Left ventricle myocardium superior (tissue), 1 donor: ENCODE measurements at regions of chr14 and their contacts with region 1.

Region 1: GRCh38 chr14:92951912-92952471 is 29.0 kb downstream of the CHGA start:
- DNase-seq: peak; percentile 91
- ATAC-seq: peak; percentile 78

Region 2: GRCh38 chr14:92846162-92846897 is 105.7 kb before region 1 on chr14:
- intact Hi-C with region 1: no loop called
- DNase-seq: no peak
- ATAC-seq: peak; percentile 75

Region 3: DNA sequence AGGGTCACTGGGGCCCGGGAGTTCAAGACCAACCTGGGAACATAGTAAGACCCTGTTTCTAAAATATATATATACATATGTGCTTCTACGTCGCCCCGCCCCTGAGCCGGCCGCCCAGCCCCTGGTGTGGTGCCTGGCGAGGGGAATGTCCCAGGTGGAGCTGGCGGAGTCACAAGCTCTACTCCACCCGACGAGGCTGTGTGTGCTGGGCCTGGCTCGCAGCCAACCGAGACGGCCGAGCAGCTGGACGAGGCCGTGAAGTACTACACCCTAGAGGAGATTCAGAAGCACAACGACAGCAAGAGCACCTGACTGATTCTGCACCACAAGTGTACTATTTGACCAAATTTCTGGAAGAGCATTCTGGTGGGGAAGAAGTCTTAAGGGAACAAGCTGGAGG is 185.9 kb after region 1 on chr14:
- intact Hi-C with region 1: loop called (anchors 2 kb)
- DNase-seq: peak; percentile 79
- ATAC-seq: peak; percentile 83